CD4-positive, alpha-beta memory T cell (primary cell): ENCODE measurements at regions of chr12 and their contacts with region 1.

Region 1: DNA sequence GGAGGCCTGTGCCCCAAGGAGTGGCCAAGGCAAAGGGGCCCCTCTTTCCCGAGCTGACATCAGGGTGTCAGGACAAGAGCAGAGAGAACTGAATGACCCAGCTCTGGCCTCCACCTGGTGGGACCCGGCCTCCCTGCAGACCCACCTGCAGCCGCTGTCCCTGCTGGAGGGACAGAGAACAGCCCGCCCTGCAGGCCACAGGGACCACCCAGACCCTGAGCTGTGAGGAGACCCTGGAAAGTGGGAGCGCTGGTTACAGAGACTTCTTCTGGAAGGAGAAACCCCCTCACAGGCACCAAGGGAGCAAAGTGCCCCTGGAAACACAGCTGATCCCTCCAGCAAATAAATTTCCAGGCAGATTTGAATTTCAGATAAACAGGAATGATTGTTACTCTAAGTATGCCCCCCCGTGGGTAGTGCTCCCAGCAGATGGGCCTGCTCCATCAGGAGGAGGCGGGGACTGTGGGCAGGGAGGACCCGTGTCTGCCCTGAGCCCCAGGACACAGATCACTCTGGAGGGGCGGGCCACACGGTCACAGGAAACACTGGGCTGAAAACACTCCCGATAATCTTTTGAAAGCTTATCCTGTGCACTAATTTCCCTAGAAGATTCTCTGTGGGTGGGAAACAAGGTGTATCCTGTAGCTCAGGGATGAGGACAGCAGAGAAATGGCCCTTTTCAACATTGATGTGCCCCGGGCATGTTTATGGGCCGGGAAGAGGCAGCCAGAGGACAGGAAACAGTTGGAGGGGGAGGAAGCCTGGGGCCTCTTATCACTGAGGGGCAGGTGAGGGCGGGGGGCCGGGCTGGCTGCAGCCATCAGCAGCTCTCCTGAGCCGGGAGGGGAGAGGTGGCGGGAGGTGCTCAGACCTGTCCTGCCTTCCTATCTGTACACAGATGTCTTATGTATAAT is 276.0 kb downstream of the ADGRD1 start:
- DNase-seq: no peak
- H3K4me3 ChIP-seq: no peak overlapping the region
- H3K4me3 Mint-ChIP-seq: no peak overlapping the region
- H3K27ac ChIP-seq: no peak overlapping the region
- H3K27ac Mint-ChIP-seq: no peak overlapping the region
- H3K4me1 ChIP-seq: no peaks in the 10 kb centered on the region
- H3K4me1 Mint-ChIP-seq: peaks cover 0 to 7% (median 4%) of the 10 kb centered on the region in 4 donors
- H3K27me3 ChIP-seq: no peaks in the 10 kb centered on the region
- H3K27me3 Mint-ChIP-seq: peaks cover 6 to 8% of the 10 kb centered on the region in 2 donors

Region 2: GRCh38 chr12:131327521-131328488 is 98.1 kb after region 1 on chr12:
- CTCF ChIA-PET with region 1: no interaction called
- POLR2A ChIA-PET with region 1: no interaction called
- intact Hi-C with region 1: no loop called
- DNase-seq: peak in 1 of 5 donors; percentile 2
- H3K4me3 ChIP-seq: no peak overlapping the region
- H3K4me3 Mint-ChIP-seq: no peak overlapping the region
- H3K27ac ChIP-seq: no peak overlapping the region
- H3K27ac Mint-ChIP-seq: no peak overlapping the region
- H3K4me1 ChIP-seq: no peaks in the 10 kb centered on the region
- H3K4me1 Mint-ChIP-seq: no peaks in the 10 kb centered on the region
- H3K27me3 ChIP-seq: no peaks in the 10 kb centered on the region
- H3K27me3 Mint-ChIP-seq: peaks cover 0 to 4% of the 10 kb centered on the region in 2 donors

Region 3: DNA sequence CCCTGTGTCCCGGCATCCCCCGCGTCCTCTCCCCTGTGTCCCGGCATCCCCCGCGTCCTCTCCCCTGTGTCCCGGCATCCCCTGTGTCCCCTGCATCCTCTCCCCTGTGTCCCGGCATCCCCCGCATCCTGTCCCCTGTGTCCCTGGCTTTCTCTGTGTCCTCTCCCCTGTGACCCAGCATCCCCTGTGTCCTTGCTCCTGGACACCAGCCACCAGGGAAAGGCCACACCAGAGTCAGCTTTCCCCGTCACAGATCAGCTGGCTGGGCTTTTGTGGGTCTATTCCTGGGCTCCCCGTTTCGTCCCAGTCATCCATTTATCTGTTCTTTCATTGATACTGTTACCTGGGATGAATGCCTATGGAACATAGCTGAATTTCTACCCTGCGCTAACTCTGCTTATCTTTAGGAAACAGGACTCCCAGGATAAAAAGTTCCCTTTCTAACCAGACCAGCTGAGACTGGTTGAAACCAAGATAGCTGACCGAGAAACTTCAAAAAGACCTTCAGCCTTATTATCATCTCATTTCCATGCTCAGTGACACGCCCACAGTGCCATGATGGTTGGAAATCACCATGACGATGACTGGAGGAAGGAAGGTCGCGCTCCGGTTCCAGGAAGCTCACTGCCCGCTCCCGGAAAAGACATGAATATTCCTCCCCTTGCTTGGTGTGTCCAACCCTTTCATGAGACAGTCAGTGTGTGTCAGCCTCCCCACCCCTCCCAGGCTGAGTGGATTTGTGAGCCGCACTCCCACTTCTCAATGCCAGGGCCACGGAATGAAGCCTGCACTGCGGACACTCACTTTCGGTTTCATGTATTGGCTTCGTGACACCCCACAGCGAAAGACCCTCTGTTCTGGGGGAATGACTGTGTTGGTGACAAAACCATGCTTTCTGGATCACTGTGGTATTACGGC is 204.8 kb after region 1 on chr12:
- CTCF ChIA-PET with region 1: no interaction called
- POLR2A ChIA-PET with region 1: no interaction called
- intact Hi-C with region 1: loop called (anchors 5 kb)
- DNase-seq: no peak
- H3K4me3 ChIP-seq: no peak overlapping the region
- H3K4me3 Mint-ChIP-seq: peak overlapping the region in 2 of 8 donors; percentile 2 to 71
- H3K27ac ChIP-seq: no peak overlapping the region
- H3K27ac Mint-ChIP-seq: no peak overlapping the region
- H3K4me1 ChIP-seq: no peaks in the 10 kb centered on the region
- H3K4me1 Mint-ChIP-seq: peaks cover 0 to 1% (median 0%) of the 10 kb centered on the region in 4 donors
- H3K27me3 ChIP-seq: no peaks in the 10 kb centered on the region
- H3K27me3 Mint-ChIP-seq: peaks cover 14 to 22% of the 10 kb centered on the region in 2 donors